A549 (cell line): ENCODE measurements at regions of chr12 and their contacts with region 1.

Region 1: GRCh38 chr12:30695199-30696103 is at the start of gene IPO8:
- DNase-seq: peak; percentile 89 to 96
- ATAC-seq: peak; percentile 89 to 94
- H3K4me3 ChIP-seq: peak within 1 kb of the TSS; percentile 87
- H3K27ac ChIP-seq: peak within 1 kb of the TSS; percentile 87 to 96
- H3K4me1 ChIP-seq: peaks cover 28% of the 10 kb centered on the region; the same call in 2 of the 3 replicates
- CTCF ChIP-seq: peak; percentile 28; the same call in 1 of the 3 replicates
- EP300 ChIP-seq: no peak
- POLR2A ChIP-seq: peak; percentile 48
- RAD21 ChIP-seq: peak; percentile 12 to 16; a peak in 1 of 5 replicates
- polyA plus RNA-seq, gene IPO8: 23.1 and 41.6 TPM in 2 replicates

Region 2: GRCh38 chr12:30706476-30706875 is 11.0 kb after region 1 on chr12:
- CTCF ChIA-PET with region 1: interaction called, 11 read pairs
- POLR2A ChIA-PET with region 1: interaction called, 3 read pairs
- DNase-seq: no peak
- ATAC-seq: no peak
- H3K4me3 ChIP-seq: no peak overlapping the region
- H3K27ac ChIP-seq: no peak overlapping the region
- H3K4me1 ChIP-seq: no peaks in the 10 kb centered on the region
- CTCF ChIP-seq: no peak
- EP300 ChIP-seq: no peak
- POLR2A ChIP-seq: no peak
- RAD21 ChIP-seq: no peak

Region 3: GRCh38 chr12:30725739-30726138 is 30.3 kb after region 1 on chr12:
- CTCF ChIA-PET with region 1: interaction called, 10 read pairs
- POLR2A ChIA-PET with region 1: interaction called, 3 read pairs
- DNase-seq: peak; percentile 47 to 56
- ATAC-seq: peak; percentile 76 to 86; a peak in 4 of 6 replicates
- H3K4me3 ChIP-seq: no peak overlapping the region
- H3K27ac ChIP-seq: peak overlapping the region in 1 of 2 experiments; percentile 68; a peak in 4 of 6 replicates
- H3K4me1 ChIP-seq: peaks cover 16% of the 10 kb centered on the region
- CTCF ChIP-seq: no peak
- EP300 ChIP-seq: no peak
- POLR2A ChIP-seq: no peak
- RAD21 ChIP-seq: no peak

Region 4: GRCh38 chr12:30754709-30755394 is 59.4 kb after region 1 on chr12 and contains the start of gene CAPRIN2:
- CTCF ChIA-PET with region 1: interaction called, 8 read pairs
- POLR2A ChIA-PET with region 1: interaction called, 17 read pairs
- DNase-seq: peak; percentile 87 to 97
- ATAC-seq: peak; percentile 94 to 96
- H3K4me3 ChIP-seq: peak within 1 kb of the TSS; percentile 75
- H3K27ac ChIP-seq: peak within 1 kb of the TSS; percentile 89 to 98
- H3K4me1 ChIP-seq: peaks cover 28% of the 10 kb centered on the region; the same call in 2 of the 3 replicates
- CTCF ChIP-seq: peak; percentile 43
- EP300 ChIP-seq: peak in 1 of 2 experiments; percentile 12; a peak in 1 of 5 replicates
- POLR2A ChIP-seq: peak; percentile 74
- RAD21 ChIP-seq: peak; percentile 66 to 82
- polyA plus RNA-seq, gene CAPRIN2: 26.2 and 31.6 TPM in 2 replicates